ENCODE measurements at regions of chr9 and their contacts with region 1.

Region 1: DNA sequence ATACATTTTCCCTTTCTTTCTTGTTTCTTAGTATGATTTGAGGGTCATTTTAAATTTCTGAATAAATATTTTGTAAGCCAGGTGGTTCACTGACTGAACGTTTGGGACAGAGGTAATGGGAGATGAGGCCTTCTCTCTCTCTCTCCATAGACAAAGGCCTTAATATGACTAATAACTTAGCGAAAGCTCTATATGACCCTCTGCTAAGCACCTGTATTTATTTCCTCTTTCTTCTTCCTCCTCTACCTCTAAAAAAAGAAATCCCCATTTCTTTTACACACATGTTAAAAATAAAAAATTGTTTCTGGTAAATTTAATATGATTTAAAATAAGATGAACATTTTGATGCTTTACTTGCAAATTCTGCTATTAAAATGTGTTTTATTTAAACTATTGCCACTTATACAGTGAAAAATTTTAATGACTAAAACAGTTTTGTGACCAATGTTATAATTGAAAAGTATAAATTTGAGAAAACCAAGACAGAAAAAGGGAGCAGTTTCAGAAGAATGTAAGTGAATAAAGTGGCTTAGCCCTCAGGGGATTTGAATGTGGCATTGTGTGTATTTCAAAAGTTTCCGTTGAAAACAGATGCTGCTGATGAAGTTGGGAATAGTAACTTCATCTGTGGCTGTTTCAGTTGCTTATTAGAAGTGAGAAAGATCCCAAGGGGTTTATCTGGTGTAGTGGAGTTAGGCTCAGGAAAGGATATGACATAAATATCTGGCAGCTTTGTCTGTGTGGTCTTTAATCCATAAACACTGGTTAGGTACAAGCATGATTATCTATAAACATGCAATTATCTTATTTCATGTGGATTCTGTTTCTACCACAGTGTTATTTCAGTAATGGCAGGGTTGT is 128.6 kb upstream of the GRHPR start:
- DNase-seq: peak; percentile 97
- H3K4me3 ChIP-seq: peak overlapping the region; percentile 46
- H3K27ac ChIP-seq: peak overlapping the region; percentile 99
- H3K4me1 ChIP-seq: peaks cover 100% of the 10 kb centered on the region
- CTCF ChIP-seq: no peak

Region 2: GRCh38 chr9:37144762-37145161 is 149.1 kb before region 1 on chr9:
- CTCF ChIA-PET with region 1: no interaction called
- POLR2A ChIA-PET with region 1: interaction called, 5 read pairs
- intact Hi-C with region 1: loop called (anchors 5 kb)
- DNase-seq: peak; percentile 65
- H3K4me3 ChIP-seq: peak overlapping the region; percentile 61
- H3K27ac ChIP-seq: peak overlapping the region; percentile 74
- H3K4me1 ChIP-seq: peaks cover 85% of the 10 kb centered on the region
- CTCF ChIP-seq: no peak

Region 3: GRCh38 chr9:37309136-37309535 is 15.2 kb after region 1 on chr9:
- CTCF ChIA-PET with region 1: no interaction called
- POLR2A ChIA-PET with region 1: interaction called, 15 read pairs
- intact Hi-C with region 1: no loop called
- DNase-seq: peak; percentile 54
- H3K4me3 ChIP-seq: no peak overlapping the region
- H3K27ac ChIP-seq: peak overlapping the region; percentile 19
- H3K4me1 ChIP-seq: peaks cover 39% of the 10 kb centered on the region
- CTCF ChIP-seq: peak; percentile 74

Measured in OCI-LY7 (cell line).